ENCODE measurements at regions of chr12 and their contacts with region 1.

Region 1: DNA sequence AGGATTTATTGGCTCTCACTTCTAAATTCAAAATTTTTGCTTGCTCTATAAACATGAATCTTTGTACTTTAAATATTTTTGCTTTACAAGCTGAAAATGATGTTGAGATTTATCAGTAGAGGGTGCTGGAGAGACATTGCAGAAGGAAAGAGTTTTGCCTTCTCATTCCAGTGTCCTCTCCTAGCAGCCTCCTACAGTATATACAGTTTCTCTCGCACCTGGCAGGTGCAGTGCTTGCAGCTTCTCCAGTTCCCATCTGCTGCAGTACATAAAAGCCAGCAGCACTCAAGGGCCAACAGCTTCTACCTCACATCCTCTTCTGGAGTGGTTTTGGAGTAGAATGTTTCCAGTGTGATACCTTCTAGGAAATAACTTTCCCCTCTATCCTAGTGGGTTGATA is 601.8 kb upstream of the ATXN7L3B start:
- DNase-seq: no peak
- ATAC-seq: no peak
- H3K4me3 ChIP-seq: no peak overlapping the region
- H3K4me3 Mint-ChIP-seq: no peak overlapping the region
- H3K27ac ChIP-seq: no peak overlapping the region
- H3K27ac Mint-ChIP-seq: no peak overlapping the region
- H3K4me1 ChIP-seq: no peaks in the 10 kb centered on the region
- H3K4me1 Mint-ChIP-seq: no peaks in the 10 kb centered on the region
- H3K27me3 ChIP-seq: no peaks in the 10 kb centered on the region
- H3K27me3 Mint-ChIP-seq: no peaks in the 10 kb centered on the region
- CTCF ChIP-seq: no peak

Region 2: DNA sequence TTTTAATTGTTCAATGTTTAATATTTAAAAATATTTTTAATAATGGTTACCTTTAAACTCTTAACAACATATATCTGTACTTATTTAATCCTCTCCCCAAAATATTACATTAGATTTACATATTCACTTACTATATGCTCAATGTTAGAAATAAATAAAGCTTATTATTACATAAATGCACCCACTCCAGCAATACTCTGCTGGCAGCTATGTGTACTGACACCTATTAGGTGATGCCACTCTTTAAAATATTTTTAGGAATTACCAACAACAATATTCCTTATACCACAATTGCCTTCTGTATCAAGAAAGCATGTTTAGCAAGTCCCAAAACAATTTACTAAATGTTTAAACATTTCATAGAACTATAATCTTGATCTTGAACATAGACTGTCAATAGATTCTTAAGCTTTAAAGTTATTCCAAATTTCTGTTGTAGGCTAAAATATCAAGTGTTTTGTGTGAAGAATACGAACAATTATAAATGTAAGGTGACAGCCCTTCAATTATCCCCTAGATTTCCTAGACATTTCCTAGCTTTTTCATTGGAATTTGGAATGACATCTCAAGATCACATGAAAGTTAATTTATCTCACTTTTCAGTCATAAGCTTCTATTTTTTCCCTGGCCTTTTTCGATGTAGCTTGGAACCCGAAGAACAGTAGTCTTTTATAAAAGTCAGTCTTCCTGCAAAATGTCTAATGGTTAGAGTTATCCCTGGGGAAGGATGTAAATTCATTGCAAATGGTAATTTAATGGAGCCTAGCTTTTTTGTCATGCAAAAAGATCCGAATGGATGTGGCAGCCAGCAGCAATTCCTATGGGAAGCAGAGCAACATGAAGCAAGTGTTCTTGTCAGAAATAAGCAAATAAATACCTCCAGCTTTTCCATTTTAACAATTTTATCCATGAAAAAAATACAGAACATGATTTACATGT is 305.7 kb before region 1 on chr12:
- CTCF ChIA-PET with region 1: no interaction called
- POLR2A ChIA-PET with region 1: no interaction called
- intact Hi-C with region 1: no loop called
- DNase-seq: no peak
- ATAC-seq: no peak
- H3K4me3 ChIP-seq: no peak overlapping the region
- H3K4me3 Mint-ChIP-seq: no peak overlapping the region
- H3K27ac ChIP-seq: no peak overlapping the region
- H3K27ac Mint-ChIP-seq: no peak overlapping the region
- H3K4me1 ChIP-seq: no peaks in the 10 kb centered on the region
- H3K4me1 Mint-ChIP-seq: no peaks in the 10 kb centered on the region
- H3K27me3 ChIP-seq: no peaks in the 10 kb centered on the region
- H3K27me3 Mint-ChIP-seq: no peaks in the 10 kb centered on the region
- CTCF ChIP-seq: no peak

Region 3: GRCh38 chr12:73902270-73902669 is 33.5 kb before region 1 on chr12:
- CTCF ChIA-PET with region 1: no interaction called
- POLR2A ChIA-PET with region 1: no interaction called
- intact Hi-C with region 1: loop called in 1 of 2 experiments (anchors 2 kb)
- DNase-seq: no peak
- ATAC-seq: no peak
- H3K4me3 ChIP-seq: no peak overlapping the region
- H3K4me3 Mint-ChIP-seq: no peak overlapping the region
- H3K27ac ChIP-seq: no peak overlapping the region
- H3K27ac Mint-ChIP-seq: no peak overlapping the region
- H3K4me1 ChIP-seq: no peaks in the 10 kb centered on the region
- H3K4me1 Mint-ChIP-seq: no peaks in the 10 kb centered on the region
- H3K27me3 ChIP-seq: no peaks in the 10 kb centered on the region
- H3K27me3 Mint-ChIP-seq: no peaks in the 10 kb centered on the region
- CTCF ChIP-seq: no peak

Region 4: GRCh38 chr12:74193191-74193590 is 257.4 kb after region 1 on chr12:
- CTCF ChIA-PET with region 1: no interaction called
- POLR2A ChIA-PET with region 1: no interaction called
- intact Hi-C with region 1: no loop called
- DNase-seq: no peak
- ATAC-seq: no peak
- H3K4me3 ChIP-seq: no peak overlapping the region
- H3K4me3 Mint-ChIP-seq: no peak overlapping the region
- H3K27ac ChIP-seq: no peak overlapping the region
- H3K27ac Mint-ChIP-seq: no peak overlapping the region
- H3K4me1 ChIP-seq: no peaks in the 10 kb centered on the region
- H3K4me1 Mint-ChIP-seq: no peaks in the 10 kb centered on the region
- H3K27me3 ChIP-seq: no peaks in the 10 kb centered on the region
- H3K27me3 Mint-ChIP-seq: no peaks in the 10 kb centered on the region
- CTCF ChIP-seq: no peak

Region 5: GRCh38 chr12:74780182-74780849 is 844.5 kb after region 1 on chr12:
- CTCF ChIA-PET with region 1: no interaction called
- POLR2A ChIA-PET with region 1: no interaction called
- intact Hi-C with region 1: no loop called
- DNase-seq: no peak
- ATAC-seq: no peak
- H3K4me3 ChIP-seq: no peak overlapping the region
- H3K4me3 Mint-ChIP-seq: no peak overlapping the region
- H3K27ac ChIP-seq: no peak overlapping the region
- H3K27ac Mint-ChIP-seq: no peak overlapping the region
- H3K4me1 ChIP-seq: no peaks in the 10 kb centered on the region
- H3K4me1 Mint-ChIP-seq: no peaks in the 10 kb centered on the region
- H3K27me3 ChIP-seq: no peaks in the 10 kb centered on the region
- H3K27me3 Mint-ChIP-seq: no peaks in the 10 kb centered on the region
- CTCF ChIP-seq: no peak

Region 6: DNA sequence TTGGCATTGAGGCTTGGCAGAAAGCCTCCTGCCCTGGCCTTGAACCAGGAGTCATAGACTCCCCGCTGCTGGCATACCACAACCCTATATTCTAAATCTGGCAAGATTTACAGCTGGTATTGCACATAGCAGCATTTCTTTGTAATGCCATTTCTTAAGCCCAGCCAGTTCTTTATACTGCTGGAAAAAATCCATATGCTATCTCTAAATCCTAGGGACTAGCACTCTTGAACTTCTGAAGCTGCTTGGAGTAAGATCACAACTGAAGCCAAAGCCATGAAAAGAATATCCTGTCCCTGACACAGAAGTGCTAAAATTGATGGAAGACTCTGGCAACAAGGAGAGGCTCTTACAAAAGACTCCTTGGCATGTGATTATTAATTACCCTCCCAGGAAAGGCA is 1184.5 kb after region 1 on chr12:
- CTCF ChIA-PET with region 1: no interaction called
- POLR2A ChIA-PET with region 1: no interaction called
- intact Hi-C with region 1: no loop called
- DNase-seq: no peak
- ATAC-seq: no peak
- H3K4me3 ChIP-seq: no peak overlapping the region
- H3K4me3 Mint-ChIP-seq: no peak overlapping the region
- H3K27ac ChIP-seq: no peak overlapping the region
- H3K27ac Mint-ChIP-seq: no peak overlapping the region
- H3K4me1 ChIP-seq: no peaks in the 10 kb centered on the region
- H3K4me1 Mint-ChIP-seq: no peaks in the 10 kb centered on the region
- H3K27me3 ChIP-seq: no peaks in the 10 kb centered on the region
- H3K27me3 Mint-ChIP-seq: no peaks in the 10 kb centered on the region
- CTCF ChIP-seq: no peak